Posterior vena cava (tissue), 2 donors: ENCODE measurements at regions of chr17 and their contacts with region 1.

Region 1: GRCh38 chr17:32486111-32486700 is 587 bp upstream of the CDK5R1 start:
- DNase-seq: peak; percentile 87

Region 2: GRCh38 chr17:32755045-32755805 is 269.0 kb after region 1 on chr17:
- intact Hi-C with region 1: loop called in 1 of 2 experiments (anchors 10 kb)
- DNase-seq: no peak

Region 3: DNA sequence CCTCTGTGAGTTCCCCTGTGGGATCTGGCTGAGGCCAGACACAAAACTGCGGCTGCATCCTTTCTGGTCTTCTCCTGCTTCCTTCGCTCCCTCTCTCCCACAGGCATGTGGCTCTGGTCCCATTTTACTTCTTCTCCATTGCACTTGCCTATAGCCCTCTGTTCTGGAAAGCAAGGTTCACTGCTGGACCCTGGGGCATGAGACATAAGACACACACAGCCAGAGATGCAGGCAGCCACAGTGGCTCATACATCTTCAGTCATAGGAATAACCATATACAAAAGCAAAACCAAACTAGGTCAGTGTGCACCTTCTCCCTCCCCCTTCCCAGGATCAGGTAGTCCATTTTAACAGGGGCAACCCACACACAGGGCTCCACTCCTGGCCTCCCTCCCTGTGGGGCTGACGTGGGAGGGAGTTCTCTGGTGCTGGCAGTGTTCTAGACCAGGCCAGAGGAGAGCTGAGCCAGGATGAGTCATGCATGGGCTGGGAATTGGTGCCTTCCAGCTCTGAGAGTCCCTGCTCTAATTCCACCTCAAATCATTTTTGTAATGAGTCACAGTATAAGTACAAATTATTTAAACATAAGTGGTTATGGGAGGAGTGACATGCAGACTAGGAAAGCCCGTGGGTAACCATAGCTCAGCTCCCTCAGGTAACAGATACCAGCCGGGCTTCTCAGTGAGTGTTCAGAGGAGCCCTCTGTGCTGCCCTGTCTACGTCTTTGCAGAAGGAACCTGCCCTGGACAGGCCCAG is 748.9 kb after region 1 on chr17:
- intact Hi-C with region 1: loop called in 1 of 2 experiments (anchors 5 kb)
- DNase-seq: peak; percentile 91